Activated B cell treated with CpG ODN at 0.5 μM for 24 hours (primary cell): ENCODE measurements at regions of chr22 and their contacts with region 1.

Region 1: GRCh38 chr22:37933711-37934376 is 19.6 kb downstream of the C22orf23 start:
- DNase-seq: peak; percentile 80
- ATAC-seq: peak; percentile 99
- H3K4me3 Mint-ChIP-seq: no peak overlapping the region
- H3K27ac Mint-ChIP-seq: no peak overlapping the region
- H3K4me1 Mint-ChIP-seq: peaks cover 19% of the 10 kb centered on the region
- H3K27me3 Mint-ChIP-seq: no peaks in the 10 kb centered on the region
- CTCF ChIP-seq: peak; percentile 81

Region 2: GRCh38 chr22:37518509-37519267 is 415.2 kb before region 1 on chr22:
- CTCF ChIA-PET with region 1: no interaction called
- POLR2A ChIA-PET with region 1: no interaction called
- intact Hi-C with region 1: no loop called
- DNase-seq: no peak
- ATAC-seq: no peak
- H3K4me3 Mint-ChIP-seq: peak overlapping the region; percentile 48
- H3K27ac Mint-ChIP-seq: no peak overlapping the region
- H3K4me1 Mint-ChIP-seq: peaks cover 4% of the 10 kb centered on the region
- H3K27me3 Mint-ChIP-seq: peaks cover 37% of the 10 kb centered on the region
- CTCF ChIP-seq: no peak

Region 3: DNA sequence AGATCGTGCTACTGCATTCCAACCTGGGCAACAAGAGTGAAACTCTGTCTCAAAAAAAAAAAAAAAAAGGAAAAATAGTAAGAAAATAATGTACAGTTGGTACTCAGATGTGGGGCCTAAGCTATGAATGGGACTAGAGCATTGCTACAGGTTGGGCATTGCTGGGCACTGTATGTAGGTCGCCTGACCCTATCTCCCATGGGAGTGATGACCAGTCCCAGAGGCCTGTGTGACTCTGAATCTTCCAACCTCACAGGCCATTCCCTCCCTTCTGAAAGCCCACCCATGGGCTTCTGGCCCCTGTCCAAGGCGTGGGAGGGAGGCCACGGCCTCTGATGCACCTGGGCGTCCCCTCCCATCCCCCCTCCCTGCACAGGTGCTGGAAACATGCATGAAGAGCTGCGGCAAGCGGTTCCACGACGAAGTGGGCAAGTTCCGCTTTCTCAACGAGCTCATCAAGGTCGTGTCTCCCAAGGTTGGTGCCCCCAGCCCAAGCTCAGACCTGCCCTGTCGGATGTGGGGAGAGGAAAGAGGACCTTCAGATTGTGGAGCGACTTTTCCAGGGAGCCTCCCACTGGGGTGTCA is 315.7 kb before region 1 on chr22:
- CTCF ChIA-PET with region 1: no interaction called
- POLR2A ChIA-PET with region 1: no interaction called
- intact Hi-C with region 1: no loop called
- DNase-seq: no peak
- ATAC-seq: peak; percentile 72
- H3K4me3 Mint-ChIP-seq: no peak overlapping the region
- H3K27ac Mint-ChIP-seq: peak overlapping the region; percentile 83
- H3K4me1 Mint-ChIP-seq: peaks cover 30% of the 10 kb centered on the region
- H3K27me3 Mint-ChIP-seq: no peaks in the 10 kb centered on the region
- CTCF ChIP-seq: no peak

Region 4: GRCh38 chr22:37896181-37896592 is 37.7 kb before region 1 on chr22:
- CTCF ChIA-PET with region 1: no interaction called
- POLR2A ChIA-PET with region 1: no interaction called
- intact Hi-C with region 1: loop called (anchors 5 kb)
- DNase-seq: no peak
- ATAC-seq: peak; percentile 76
- H3K4me3 Mint-ChIP-seq: peak overlapping the region; percentile 15
- H3K27ac Mint-ChIP-seq: peak overlapping the region; percentile 84
- H3K4me1 Mint-ChIP-seq: peaks cover 12% of the 10 kb centered on the region
- H3K27me3 Mint-ChIP-seq: no peaks in the 10 kb centered on the region
- CTCF ChIP-seq: no peak

Region 5: DNA sequence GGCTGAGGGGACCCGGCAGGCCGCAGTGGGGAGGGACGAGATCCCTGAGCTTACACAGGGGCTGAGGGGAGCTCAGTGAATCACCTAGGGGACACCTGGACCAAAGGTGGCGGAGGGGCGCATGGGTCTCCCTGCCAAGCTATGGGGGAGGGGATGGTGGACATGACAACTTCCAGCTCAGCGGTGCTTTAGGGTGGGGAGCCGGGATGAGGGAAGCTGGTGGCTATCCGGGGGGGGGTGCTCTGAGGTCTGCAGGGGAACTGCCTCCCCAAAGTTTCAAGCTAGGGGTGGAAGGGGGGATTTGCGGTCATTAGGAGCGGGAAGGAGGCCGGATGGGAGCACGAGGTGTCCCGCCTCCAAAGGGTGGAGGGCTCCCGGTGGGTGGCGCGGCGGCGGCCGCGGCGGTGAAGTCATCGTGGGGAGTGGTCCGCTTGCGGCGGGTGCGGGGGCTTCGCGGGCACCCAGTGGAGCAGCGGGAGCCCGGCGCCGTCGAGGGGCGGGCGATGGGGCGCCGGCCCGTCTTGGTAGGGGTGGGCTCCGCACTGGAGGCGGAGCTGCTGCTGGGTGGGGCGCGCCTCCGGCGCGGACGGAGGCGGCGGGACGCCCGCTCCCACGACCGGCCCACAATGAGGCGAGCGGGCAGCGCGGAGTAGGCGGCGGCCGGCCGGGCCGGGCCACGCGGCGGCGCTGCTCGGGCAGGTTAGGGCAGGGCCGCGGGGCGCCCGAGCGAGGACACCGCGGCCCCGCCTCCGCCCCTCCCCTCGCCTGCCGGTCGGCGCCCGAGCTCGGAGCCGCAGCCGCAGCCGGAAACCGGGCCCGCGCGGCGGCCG is 28.1 kb before region 1 on chr22 and contains the start of gene MICALL1:
- CTCF ChIA-PET with region 1: interaction called, 10 read pairs
- POLR2A ChIA-PET with region 1: no interaction called
- intact Hi-C with region 1: loop called (anchors 1 kb)
- DNase-seq: peak; percentile 81
- ATAC-seq: peak; percentile 90
- H3K4me3 Mint-ChIP-seq: peak within 1 kb of the TSS; percentile 81
- H3K27ac Mint-ChIP-seq: peak within 1 kb of the TSS; percentile 85
- H3K4me1 Mint-ChIP-seq: peaks cover 22% of the 10 kb centered on the region
- H3K27me3 Mint-ChIP-seq: no peaks in the 10 kb centered on the region
- CTCF ChIP-seq: no peak
- total RNA-seq, gene MICALL1: 20.8 and 27.6 TPM in 2 replicates

Region 6: DNA sequence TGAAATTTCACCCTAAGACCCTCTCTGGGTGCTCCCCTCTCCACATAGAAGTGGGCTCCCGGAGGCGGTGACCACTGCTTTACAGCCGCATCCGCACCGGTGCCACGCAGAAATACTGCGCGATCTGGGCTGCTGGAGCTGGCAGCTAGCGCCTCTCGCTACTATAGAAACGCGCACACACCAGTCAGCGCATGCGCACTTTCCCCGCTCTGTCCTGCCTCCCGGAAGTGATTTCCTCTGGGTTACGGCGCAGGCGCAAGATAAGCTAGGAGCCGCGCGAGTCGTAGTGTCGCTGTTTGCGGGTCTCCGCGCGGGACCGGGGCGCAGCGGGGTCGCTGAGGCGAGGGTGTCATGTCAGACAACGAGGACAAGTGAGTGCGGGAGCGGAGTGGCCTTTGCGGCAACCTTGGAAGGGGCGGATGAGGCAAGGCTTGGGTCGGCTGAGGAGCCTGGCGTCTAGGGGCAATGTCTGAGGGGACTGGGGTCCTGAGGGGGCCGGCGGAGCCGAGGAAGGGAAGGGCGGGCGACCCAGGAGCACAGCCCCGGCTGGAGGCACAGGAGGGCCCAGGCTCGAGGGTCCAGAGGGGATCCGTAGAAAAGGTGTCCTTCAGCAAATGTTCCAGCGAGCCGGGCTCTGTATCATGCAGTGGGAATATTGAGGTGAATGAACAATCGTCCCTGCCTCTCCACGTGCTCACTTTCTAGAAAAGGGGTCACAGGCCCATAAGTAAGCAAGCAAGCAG is 19.8 kb after region 1 on chr22 and contains the starts of genes C22orf23 and POLR2F:
- CTCF ChIA-PET with region 1: interaction called, 3 read pairs
- POLR2A ChIA-PET with region 1: interaction called, 3 read pairs
- intact Hi-C with region 1: loop called (anchors 2 kb)
- DNase-seq: peak; percentile 89
- ATAC-seq: peak; percentile 93
- H3K4me3 Mint-ChIP-seq: peak within 1 kb of the TSS; percentile 100
- H3K27ac Mint-ChIP-seq: peak within 1 kb of the TSS; percentile 95
- H3K4me1 Mint-ChIP-seq: peaks cover 30% of the 10 kb centered on the region
- H3K27me3 Mint-ChIP-seq: peaks cover 14% of the 10 kb centered on the region
- CTCF ChIP-seq: no peak
- total RNA-seq, gene C22orf23: 0.16 TPM in 1 of 2 replicates, not detected in the other
- total RNA-seq, gene POLR2F: 47.8 and 67.3 TPM in 2 replicates

Region 7: DNA sequence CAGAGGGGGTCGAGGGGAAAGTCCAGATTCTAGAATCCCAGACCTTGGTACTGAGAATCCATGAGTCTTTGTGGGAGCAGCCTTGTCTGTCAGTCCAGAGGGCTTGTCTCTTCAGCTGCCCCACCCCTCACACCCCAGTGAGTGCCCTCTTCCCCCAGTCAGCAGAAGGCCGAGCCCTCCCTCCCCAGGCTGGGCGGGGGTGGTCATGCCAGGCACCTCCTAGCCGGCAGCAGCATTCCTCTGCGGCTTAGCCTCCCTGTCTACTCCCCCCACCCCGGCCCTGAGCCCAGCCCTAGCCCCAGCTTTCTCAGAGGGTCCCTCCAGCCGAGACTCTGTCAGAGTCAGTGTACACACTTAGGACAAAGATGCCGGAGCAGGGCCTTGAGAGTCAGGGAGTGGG is 45.9 kb after region 1 on chr22:
- CTCF ChIA-PET with region 1: no interaction called
- POLR2A ChIA-PET with region 1: no interaction called
- intact Hi-C with region 1: no loop called
- DNase-seq: no peak
- ATAC-seq: no peak
- H3K4me3 Mint-ChIP-seq: no peak overlapping the region
- H3K27ac Mint-ChIP-seq: no peak overlapping the region
- H3K4me1 Mint-ChIP-seq: no peaks in the 10 kb centered on the region
- H3K27me3 Mint-ChIP-seq: no peaks in the 10 kb centered on the region
- CTCF ChIP-seq: no peak